Spleen (tissue), 13 donors: ENCODE measurements at regions of chr6 and their contacts with region 1.

Region 1: DNA sequence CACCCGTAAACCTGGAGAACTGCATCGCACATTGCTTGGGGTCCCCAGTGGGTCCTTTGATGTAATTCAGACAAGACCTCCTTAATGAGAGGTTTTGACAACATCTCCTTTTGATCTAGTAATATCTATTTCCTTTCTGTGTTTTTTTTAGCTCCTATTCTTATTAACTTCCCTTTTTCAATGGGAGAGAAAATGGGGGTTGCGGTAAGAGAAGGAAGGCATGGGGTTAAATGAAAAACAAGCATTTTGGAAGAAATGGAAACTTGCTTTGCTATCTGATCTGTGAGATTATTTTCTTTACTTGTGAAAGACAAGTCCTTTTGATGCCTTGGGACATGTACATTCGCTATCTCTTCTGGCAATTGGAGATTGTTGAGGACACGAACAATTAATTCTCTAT is 418.6 kb upstream of the MAN1A1 start:
- DNase-seq: no peak
- H3K4me3 ChIP-seq: no peak overlapping the region
- H3K27ac ChIP-seq: no peak overlapping the region
- H3K4me1 ChIP-seq: peaks cover 0 to 8% (median 0%) of the 10 kb centered on the region in 6 donors
- H3K27me3 ChIP-seq: no peaks in the 10 kb centered on the region
- CTCF ChIP-seq: no peak
- POLR2A ChIP-seq: no peak

Region 2: DNA sequence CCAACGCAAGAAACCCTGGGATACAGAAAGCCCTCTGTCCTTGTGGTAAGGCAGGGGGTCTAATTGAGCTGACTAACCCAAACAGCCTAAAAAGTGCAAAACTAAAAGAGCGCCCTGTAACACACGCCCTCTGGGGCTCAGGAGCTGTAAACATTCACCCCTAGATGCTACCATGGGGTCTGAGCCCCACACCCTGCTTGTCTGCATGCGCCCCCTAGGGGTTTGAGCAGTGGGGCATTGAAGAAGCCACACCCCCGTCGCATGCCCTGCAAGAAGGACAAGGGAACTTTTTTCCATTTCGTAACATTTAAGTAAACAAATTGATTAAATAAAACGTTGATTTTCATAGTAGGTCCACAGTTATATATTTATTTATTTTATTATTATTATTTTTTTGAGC is 198.3 kb after region 1 on chr6:
- intact Hi-C with region 1: loop called (anchors 10 kb)
- DNase-seq: no peak
- H3K4me3 ChIP-seq: no peak overlapping the region
- H3K27ac ChIP-seq: no peak overlapping the region
- H3K4me1 ChIP-seq: no peaks in the 10 kb centered on the region
- H3K27me3 ChIP-seq: no peaks in the 10 kb centered on the region
- CTCF ChIP-seq: no peak
- POLR2A ChIP-seq: no peak